GM13976 (cell line): ENCODE measurements at regions of chr12 and their contacts with region 1.

Region 1: GRCh38 chr12:29317556-29318363 is 63.2 kb downstream of the ERGIC2 start:
- DNase-seq: peak; percentile 57
- CTCF ChIP-seq: peak; percentile 93

Region 2: DNA sequence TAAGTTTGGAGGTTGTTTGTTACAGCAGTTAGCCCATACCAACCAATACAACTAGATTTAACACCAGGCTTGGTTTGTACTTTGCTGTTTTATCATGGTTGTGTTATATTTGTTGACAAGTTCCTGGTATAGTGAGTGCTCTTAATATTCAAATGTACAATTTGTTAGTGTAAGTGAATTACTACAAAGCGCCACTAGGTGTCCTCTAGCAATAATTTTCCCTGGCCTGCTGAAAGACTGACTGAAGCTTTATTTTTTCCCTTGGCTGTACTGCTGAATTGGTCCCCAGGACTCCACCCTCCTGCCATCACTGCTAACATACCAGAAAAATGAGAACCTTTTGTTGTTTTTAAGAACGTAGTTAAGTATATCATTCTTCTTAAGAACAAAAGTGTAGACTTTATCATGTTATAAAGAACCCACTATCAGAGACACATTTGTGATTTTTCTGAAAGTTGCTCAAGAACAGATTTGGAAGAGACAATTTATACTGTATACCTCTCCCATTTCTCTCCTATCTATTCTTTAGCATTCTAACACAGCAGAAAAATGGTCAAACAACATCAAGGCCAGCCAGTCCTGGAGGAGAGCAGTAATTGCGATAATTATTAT is 244.0 kb before region 1 on chr12:
- in situ Hi-C with region 1: loop called (anchors 10 kb)
- DNase-seq: peak; percentile 17
- CTCF ChIP-seq: peak; percentile 44

Region 3: GRCh38 chr12:29425714-29426113 is 108.0 kb after region 1 on chr12:
- in situ Hi-C with region 1: no loop called
- DNase-seq: no peak
- CTCF ChIP-seq: no peak

Region 4: DNA sequence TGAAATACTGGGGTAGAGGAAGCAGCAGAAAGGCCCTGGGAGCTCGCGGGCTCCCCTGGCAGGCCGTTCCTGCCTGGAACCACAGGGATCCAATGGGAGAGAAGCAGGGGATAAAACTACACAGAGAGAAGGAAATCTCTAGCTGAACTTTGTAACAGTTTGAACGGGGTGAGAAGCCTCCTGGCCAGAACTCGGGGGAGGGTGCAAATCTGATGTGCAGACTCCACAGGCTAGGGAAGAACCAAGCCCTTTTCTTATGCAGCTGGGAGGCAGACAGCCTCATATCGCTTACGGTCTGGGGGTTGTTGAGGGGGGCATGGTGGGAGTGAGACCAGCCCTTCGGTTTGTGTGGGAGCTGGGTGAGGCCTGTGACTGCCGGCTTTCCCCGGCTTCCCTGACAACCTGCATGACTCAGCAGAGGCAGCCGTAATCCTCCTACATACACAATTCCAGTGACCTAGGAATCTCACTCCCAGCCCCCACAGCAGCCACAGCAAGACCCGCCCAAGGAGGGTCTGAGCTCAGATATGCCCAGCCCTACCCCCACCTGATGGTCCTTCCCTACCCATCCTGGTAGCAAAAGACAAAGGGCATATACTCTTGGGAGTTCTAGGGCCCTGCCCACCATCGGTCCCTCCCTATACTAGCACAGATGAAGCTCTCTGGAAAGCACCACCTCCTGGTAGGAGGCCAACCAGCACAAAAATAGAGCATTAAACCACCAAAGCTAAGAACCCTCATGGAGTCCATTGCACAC is 323.0 kb after region 1 on chr12:
- in situ Hi-C with region 1: no loop called
- DNase-seq: no peak
- CTCF ChIP-seq: no peak

Region 5: GRCh38 chr12:30602678-30603077 is 1284.9 kb after region 1 on chr12:
- in situ Hi-C with region 1: no loop called
- DNase-seq: no peak
- CTCF ChIP-seq: no peak